Aorta (tissue), 5 donors: ENCODE measurements at regions of chr14 and their contacts with region 1.

Region 1: DNA sequence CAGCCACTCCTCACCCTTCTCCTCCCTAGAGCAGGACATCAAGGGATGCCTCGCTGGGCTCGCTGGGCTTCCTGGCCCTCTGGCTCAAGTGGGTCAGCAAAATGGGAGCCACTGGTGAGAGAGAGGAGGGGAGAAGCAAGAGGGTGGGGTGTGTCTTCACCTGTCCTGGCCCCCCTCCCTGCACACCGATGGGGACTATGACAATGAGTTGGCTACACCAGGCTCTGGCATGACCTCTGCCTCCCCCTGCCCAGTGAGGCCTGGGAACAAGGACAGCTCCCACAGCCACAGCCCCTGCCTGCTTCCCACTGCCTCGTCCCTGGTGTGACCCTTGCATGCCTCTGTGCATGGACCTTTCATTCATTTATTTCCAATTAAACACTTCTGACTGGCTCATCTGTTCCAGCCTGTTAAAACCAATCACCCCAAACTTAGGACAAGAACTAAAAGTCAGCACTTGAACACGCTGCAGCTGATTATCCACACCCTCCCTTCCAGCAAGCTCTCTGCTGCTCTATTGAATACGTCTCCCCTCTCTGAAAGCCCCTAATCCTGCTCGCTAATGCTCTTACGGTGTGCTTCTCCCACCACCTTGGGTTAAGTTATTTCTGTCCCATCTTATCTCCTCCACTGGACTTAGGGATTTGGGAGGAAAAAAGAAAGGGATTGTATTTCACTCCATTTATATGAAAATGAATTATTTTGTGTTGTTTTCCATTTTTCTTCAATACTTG is 5.8 kb upstream of the PPP2R5C start:
- DNase-seq: peak in 1 of 2 donors; percentile 56
- ATAC-seq: no peak
- H3K4me3 ChIP-seq: no peak overlapping the region
- H3K27ac ChIP-seq: no peak overlapping the region
- H3K4me1 ChIP-seq: peaks cover 0 to 1% of the 10 kb centered on the region in 2 donors
- H3K27me3 ChIP-seq: peaks cover 0 to 3% of the 10 kb centered on the region in 2 donors

Region 2: DNA sequence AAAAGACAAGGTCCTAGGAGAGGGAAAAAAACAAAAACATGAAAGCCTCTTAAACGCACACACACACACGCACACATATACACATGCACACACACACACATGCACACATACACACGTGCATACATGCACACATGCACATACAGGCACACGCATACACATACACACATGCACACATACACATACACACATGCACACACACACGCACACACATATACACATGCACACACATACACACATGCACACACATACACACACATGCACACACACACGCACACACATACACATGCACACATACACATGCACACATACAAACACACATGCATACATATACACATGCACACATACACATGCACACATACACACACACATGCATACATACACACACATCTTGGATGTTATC is 72.4 kb before region 1 on chr14:
- intact Hi-C with region 1: no loop called
- DNase-seq: no peak
- ATAC-seq: no peak
- H3K4me3 ChIP-seq: no peak overlapping the region
- H3K27ac ChIP-seq: no peak overlapping the region
- H3K4me1 ChIP-seq: no peaks in the 10 kb centered on the region
- H3K27me3 ChIP-seq: peaks cover 0 to 1% of the 10 kb centered on the region in 2 donors

Region 3: GRCh38 chr14:101721951-101722661 is 33.7 kb before region 1 on chr14:
- intact Hi-C with region 1: no loop called
- DNase-seq: no peak
- ATAC-seq: peak; percentile 29
- H3K4me3 ChIP-seq: no peak overlapping the region
- H3K27ac ChIP-seq: no peak overlapping the region
- H3K4me1 ChIP-seq: no peaks in the 10 kb centered on the region
- H3K27me3 ChIP-seq: no peaks in the 10 kb centered on the region

Region 4: DNA sequence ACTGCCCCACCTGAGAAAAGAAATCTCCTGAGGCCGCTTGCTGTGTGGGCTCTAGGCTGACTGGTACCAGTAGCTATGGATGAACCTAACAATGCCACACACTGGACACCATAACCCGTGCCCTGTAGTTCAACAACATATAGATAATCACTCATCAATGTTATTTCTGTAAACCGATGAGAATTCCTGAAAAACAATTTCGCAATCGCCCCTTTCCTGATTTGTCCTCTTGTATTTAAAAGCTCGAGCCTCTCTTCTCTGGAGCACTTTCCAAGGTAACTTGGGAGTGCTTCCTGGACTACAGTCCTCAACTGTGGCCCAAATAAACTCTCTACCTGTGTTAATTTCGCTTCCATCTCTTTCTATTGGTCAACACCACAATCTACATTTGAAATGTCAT is 20.3 kb before region 1 on chr14:
- intact Hi-C with region 1: loop called in 1 of 2 experiments (anchors 1 kb)
- DNase-seq: no peak
- ATAC-seq: no peak
- H3K4me3 ChIP-seq: no peak overlapping the region
- H3K27ac ChIP-seq: no peak overlapping the region
- H3K4me1 ChIP-seq: no peaks in the 10 kb centered on the region
- H3K27me3 ChIP-seq: no peaks in the 10 kb centered on the region